CD14-positive monocyte (primary cell): ENCODE measurements at regions of chr2 and their contacts with region 1.

Region 1: DNA sequence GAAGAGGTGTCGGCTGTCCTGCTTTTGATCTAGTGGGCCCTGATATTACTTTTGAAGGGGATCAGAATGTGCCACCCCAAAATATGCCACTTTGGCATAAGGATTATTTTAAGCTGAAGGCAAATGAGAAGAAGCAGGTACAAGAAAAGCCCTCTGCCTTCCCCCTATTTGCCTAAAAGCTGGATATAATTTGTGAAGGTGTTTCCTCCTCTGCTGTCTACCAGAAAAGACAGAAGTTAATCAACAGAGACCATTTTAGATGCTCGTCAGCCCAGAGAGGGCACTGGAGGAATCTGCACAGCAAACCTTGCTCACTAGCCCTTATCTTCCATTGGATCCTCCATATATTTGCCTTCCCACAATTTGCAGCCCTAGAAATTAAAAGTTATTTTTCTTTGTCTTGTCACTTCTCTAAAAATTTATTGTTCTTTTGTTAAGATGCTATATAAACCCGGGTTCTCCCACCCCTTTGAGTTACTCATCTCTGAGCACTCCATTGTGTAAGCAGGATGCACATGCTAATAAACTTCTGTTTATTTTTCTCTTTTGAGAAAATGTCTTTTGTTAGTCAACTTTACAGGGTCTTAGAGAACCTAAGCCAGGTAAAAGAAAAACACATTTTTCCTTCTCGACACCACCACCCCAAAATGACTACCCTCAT is 163.2 kb upstream of the SLC1A4 start:
- DNase-seq: peak; percentile 51 to 81 (median 74)
- H3K4me3 ChIP-seq: peak overlapping the region in 1 of 3 experiments; percentile 12
- H3K4me3 Mint-ChIP-seq: peak overlapping the region in 1 of 2 donors; percentile 21
- H3K27ac ChIP-seq: peak overlapping the region; percentile 13 to 77
- H3K27ac Mint-ChIP-seq: peak overlapping the region; percentile 77 to 93 (median 88)
- H3K4me1 ChIP-seq: peaks cover 26 to 34% of the 10 kb centered on the region in 2 donors
- H3K4me1 Mint-ChIP-seq: peaks cover 37% of the 10 kb centered on the region
- H3K27me3 ChIP-seq: no peaks in the 10 kb centered on the region
- H3K27me3 Mint-ChIP-seq: peaks cover 0 to 4% (median 0%) of the 10 kb centered on the region in 3 donors
- CTCF ChIP-seq: no peak

Region 2: DNA sequence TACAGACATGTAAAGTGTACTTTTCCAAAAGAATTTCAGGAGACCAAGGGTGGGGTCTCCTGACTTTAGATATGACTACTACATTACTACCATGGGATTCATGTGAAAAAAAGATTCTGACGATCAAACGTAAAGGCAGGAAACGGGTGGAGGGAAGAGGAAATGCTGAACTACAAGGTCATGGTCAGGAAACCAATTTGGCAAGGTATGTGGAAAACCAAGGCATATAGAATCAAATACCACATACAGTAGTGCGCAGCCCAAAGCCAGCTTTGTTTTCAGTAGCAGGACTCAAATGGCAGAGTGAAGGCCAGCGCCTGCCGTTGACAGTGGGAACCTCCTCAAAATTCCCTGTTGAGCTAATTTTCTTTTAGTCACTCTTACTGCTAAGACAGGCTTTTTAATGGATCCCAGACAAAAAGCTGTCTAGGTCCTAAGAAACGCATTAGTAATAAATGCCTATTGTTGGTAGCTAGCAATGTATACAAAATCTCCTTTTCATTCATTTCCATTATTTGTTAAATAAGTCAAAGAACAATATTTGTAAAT is 114.6 kb before region 1 on chr2:
- intact Hi-C with region 1: no loop called
- DNase-seq: peak in 2 of 3 donors; percentile 12 to 17
- H3K4me3 ChIP-seq: no peak overlapping the region
- H3K4me3 Mint-ChIP-seq: peak overlapping the region in 1 of 2 donors; percentile 33
- H3K27ac ChIP-seq: no peak overlapping the region
- H3K27ac Mint-ChIP-seq: peak overlapping the region in 1 of 7 donors; percentile 58
- H3K4me1 ChIP-seq: peaks cover 7 to 11% of the 10 kb centered on the region in 2 donors
- H3K4me1 Mint-ChIP-seq: peaks cover 12% of the 10 kb centered on the region
- H3K27me3 ChIP-seq: no peaks in the 10 kb centered on the region
- H3K27me3 Mint-ChIP-seq: peaks cover 0 to 4% (median 0%) of the 10 kb centered on the region in 3 donors
- CTCF ChIP-seq: no peak

Region 3: DNA sequence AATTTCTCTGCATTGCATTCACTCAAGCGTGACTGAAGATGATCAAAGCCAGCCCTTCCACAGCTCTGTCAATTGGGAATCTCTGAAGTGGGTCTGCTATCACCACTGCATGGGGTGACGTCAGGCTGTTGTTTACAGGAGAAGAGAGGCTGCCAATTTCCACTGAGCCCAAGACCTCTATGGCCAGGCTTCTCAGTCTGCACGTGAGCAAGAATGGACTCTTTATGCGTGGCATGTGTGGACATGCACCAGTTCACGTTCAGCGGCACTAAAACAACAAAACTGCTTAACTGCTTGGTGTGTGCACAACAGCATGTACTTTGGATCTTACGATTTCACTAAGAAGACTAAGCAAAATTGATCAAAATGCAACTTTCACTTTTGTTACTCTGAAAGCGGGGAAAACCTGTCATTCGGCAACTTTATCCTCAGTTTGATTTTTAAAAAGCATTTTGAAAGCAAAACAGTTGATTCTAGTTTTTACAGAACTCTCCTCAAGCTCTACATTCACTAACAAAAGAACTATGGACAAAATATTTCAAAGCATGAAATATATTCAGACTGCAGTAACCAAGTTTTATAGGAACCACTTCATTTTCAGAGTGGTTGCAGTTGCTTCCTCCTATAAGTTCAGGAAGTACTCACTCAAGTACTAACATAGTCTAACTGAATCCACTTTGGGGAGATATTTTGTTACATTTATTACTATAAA is 95.3 kb before region 1 on chr2:
- intact Hi-C with region 1: no loop called
- DNase-seq: peak; percentile 40 to 65 (median 64)
- H3K4me3 ChIP-seq: peak overlapping the region; percentile 43 to 99 (median 84)
- H3K4me3 Mint-ChIP-seq: peak overlapping the region; percentile 78 to 90
- H3K27ac ChIP-seq: peak overlapping the region; percentile 65 to 99
- H3K27ac Mint-ChIP-seq: peak overlapping the region; percentile 92 to 98 (median 95)
- H3K4me1 ChIP-seq: peaks cover 44 to 51% of the 10 kb centered on the region in 2 donors
- H3K4me1 Mint-ChIP-seq: peaks cover 49% of the 10 kb centered on the region
- H3K27me3 ChIP-seq: no peaks in the 10 kb centered on the region
- H3K27me3 Mint-ChIP-seq: no peaks in the 10 kb centered on the region
- CTCF ChIP-seq: no peak

Region 4: DNA sequence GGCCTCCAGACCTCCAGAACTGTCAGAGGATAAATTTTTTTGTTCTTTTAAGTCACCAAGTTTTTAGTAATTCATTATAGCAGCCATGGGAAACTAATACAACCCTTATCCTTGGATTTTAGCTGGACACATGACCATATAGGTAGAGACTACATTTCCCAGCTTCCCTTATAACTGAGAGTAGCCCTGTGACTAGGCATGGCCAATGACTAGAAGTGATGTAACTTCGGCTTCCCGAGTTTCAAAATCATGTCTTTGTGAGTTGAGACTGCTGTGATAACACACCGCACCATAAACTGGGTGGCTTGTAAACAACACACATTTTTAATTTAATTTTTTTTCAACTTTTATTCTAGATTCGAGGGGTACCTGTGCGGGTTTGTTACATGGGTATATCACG is 38.3 kb before region 1 on chr2:
- intact Hi-C with region 1: no loop called
- DNase-seq: peak; percentile 60 to 86 (median 80)
- H3K4me3 ChIP-seq: no peak overlapping the region
- H3K4me3 Mint-ChIP-seq: no peak overlapping the region
- H3K27ac ChIP-seq: no peak overlapping the region
- H3K27ac Mint-ChIP-seq: peak overlapping the region in 2 of 7 donors; percentile 63 to 72
- H3K4me1 ChIP-seq: peaks cover 14 to 16% of the 10 kb centered on the region in 2 donors
- H3K4me1 Mint-ChIP-seq: peaks cover 24% of the 10 kb centered on the region
- H3K27me3 ChIP-seq: no peaks in the 10 kb centered on the region
- H3K27me3 Mint-ChIP-seq: no peaks in the 10 kb centered on the region
- CTCF ChIP-seq: no peak

Region 5: DNA sequence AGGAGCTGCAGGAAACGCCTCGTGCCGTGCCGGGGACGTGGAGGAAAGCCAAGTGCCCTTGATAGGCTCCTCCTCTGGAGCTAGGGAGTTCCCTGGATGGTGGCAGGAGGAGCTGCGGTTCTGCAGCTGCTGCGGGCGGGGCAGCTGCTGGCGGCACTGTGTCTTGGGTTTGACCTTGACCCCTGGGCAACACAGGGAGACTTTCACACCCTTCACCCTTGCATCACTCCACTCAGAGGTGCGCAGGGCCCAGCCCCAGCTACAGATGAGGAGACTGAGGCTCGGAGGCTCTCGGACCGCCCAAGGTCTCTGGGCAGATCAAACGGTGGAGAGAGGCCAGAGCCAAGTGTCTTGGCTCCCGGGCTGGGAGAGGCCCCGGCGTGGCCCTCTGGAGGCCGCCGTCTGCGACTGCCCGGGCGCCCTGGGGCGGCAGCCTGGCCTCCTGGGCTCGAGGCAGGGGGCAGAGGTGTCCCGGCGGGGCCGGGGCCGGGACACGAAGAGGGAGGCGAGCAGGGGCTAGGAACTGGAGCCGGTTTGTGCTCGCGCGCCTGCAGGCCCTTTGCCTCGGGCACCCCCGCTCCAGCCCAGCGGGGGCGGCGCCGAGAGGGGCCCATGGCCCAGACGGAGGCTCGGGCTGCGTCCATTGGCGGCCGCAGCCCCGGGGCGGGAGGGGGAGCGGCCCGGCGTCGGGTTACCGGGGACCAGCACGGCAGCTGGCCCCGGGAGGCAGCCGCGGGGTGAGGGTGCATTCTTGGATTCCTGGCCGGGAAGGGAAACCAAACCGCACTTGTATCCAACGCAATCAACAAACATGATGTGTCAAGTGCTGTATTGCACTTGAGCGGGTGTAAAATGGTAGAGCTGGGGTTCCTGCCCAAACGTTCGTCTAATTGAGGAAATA is 33.6 kb after region 1 on chr2:
- intact Hi-C with region 1: loop called (anchors 2 to 5 kb)
- DNase-seq: peak; percentile 85 to 88 (median 86)
- H3K4me3 ChIP-seq: peak overlapping the region; percentile 44 to 69 (median 53)
- H3K4me3 Mint-ChIP-seq: peak overlapping the region; percentile 45 to 86
- H3K27ac ChIP-seq: peak overlapping the region; percentile 98 to 99
- H3K27ac Mint-ChIP-seq: peak overlapping the region in 3 of 7 donors; percentile 95 to 98 (median 95)
- H3K4me1 ChIP-seq: peaks cover 88 to 91% of the 10 kb centered on the region in 2 donors
- H3K4me1 Mint-ChIP-seq: peaks cover 36% of the 10 kb centered on the region
- H3K27me3 ChIP-seq: no peaks in the 10 kb centered on the region
- H3K27me3 Mint-ChIP-seq: peaks cover 0 to 1% (median 0%) of the 10 kb centered on the region in 3 donors
- CTCF ChIP-seq: no peak